Mammary epithelial cell (primary cell): ENCODE measurements at regions of chr15 and their contacts with region 1.

Region 1: DNA sequence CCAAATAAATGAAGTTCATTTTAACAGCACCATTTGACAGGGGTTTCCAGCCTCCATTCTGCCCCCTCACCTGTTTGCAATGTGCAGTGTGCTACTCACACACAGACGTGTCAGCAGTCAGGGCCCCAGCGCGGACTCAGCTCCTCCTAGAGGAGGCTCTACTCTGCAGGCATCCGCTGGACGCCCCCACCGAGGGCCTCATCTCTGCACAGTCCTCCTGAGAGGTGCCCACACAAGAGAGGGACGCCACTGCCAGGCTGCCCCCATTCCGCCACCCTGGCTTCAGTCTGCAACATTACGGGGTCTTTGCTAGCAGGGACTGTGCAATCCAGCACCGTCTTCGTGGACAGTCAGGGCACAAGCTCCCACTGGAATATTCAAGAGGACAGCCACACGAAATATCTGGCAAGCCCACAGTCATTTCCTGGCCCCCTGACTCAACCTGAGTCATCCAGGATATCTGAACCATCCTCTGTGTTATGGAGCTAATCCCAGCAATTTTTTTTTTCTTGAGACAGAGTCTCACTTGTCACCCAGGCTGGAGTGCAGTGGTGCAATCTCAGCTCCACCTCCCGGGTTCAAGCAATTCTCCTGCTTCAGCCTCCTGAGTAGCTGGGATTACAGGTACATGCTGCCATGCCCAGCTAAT is 255.0 kb downstream of the OCA2 start:
- DNase-seq: peak; percentile 6
- H3K4me3 ChIP-seq: no peak overlapping the region
- H3K27ac ChIP-seq: no peak overlapping the region
- H3K4me1 ChIP-seq: no peaks in the 10 kb centered on the region
- H3K27me3 ChIP-seq: no peaks in the 10 kb centered on the region
- CTCF ChIP-seq: no peak

Region 2: GRCh38 chr15:27679731-27680471 is 164.2 kb before region 1 on chr15:
- CTCF ChIA-PET with region 1: no interaction called
- dilution Hi-C with region 1: no loop called
- in situ Hi-C with region 1: no loop called
- intact Hi-C with region 1: no loop called
- DNase-seq: no peak
- H3K4me3 ChIP-seq: no peak overlapping the region
- H3K27ac ChIP-seq: no peak overlapping the region
- H3K4me1 ChIP-seq: no peaks in the 10 kb centered on the region
- H3K27me3 ChIP-seq: no peaks in the 10 kb centered on the region
- CTCF ChIP-seq: no peak

Region 3: DNA sequence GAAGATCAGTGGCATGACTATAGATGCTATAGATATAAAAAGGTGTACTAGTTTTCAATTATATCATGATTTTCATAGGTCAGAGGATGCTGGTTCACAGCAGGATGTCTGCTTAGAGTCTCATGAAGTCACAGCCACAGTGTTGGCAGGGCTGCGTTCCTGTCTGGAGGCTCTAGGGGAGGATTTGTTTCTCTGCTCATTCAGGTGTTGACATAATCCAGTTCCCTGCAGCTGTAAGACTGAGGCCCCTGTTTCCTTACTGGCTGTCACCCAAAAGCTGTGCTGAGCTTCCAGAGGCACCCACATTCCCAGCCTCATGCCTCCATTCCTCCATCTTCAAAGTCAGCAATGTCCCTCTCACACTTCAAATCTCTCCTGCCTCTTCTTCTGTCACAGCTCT is 84.2 kb after region 1 on chr15:
- CTCF ChIA-PET with region 1: no interaction called
- dilution Hi-C with region 1: loop called (anchors 25 kb)
- in situ Hi-C with region 1: no loop called
- intact Hi-C with region 1: no loop called
- DNase-seq: no peak
- H3K4me3 ChIP-seq: no peak overlapping the region
- H3K27ac ChIP-seq: no peak overlapping the region
- H3K4me1 ChIP-seq: no peaks in the 10 kb centered on the region
- H3K27me3 ChIP-seq: no peaks in the 10 kb centered on the region
- CTCF ChIP-seq: no peak